Lower leg skin (tissue), 4 donors: ENCODE measurements at regions of chr11 and their contacts with region 1.

Region 1: DNA sequence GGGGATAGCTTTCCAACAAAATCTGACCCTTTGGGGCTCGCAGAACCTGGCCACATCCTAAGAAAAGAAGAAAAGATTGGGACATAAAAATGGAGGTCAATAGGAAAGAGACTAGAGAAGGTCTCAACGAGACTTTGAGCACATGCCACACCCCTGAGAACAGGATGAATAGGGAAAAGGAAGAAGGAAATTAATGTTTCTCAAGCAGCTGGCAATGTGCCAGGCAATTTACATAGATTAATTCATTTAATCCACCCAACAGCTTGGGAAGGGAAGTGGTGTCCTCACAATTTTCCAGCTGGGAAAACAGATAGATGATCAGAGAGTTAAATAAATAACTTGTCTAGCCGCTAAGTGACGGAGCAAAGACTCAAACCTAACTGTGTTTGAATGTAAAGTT is 50.7 kb downstream of the PAMR1 start:
- DNase-seq: no peak
- H3K4me3 ChIP-seq: no peak overlapping the region
- CTCF ChIP-seq: no peak
- POLR2A ChIP-seq: no peak

Region 2: GRCh38 chr11:35523331-35523768 is 48.7 kb after region 1 on chr11:
- intact Hi-C with region 1: loop called (anchors 5 kb)
- DNase-seq: no peak
- H3K4me3 ChIP-seq: no peak overlapping the region
- CTCF ChIP-seq: no peak
- POLR2A ChIP-seq: no peak